Psoas muscle (tissue), 8 donors: ENCODE measurements at regions of chr18 and their contacts with region 1.

Region 1: GRCh38 chr18:48589797-48590519 is 51.1 kb downstream of the CTIF start:
- DNase-seq: peak; percentile 71 to 86
- ATAC-seq: peak; percentile 65 to 84 (median 82)
- H3K4me3 ChIP-seq: no peak overlapping the region
- H3K27ac ChIP-seq: peak overlapping the region; percentile 58
- H3K4me1 ChIP-seq: peaks cover 34% of the 10 kb centered on the region
- H3K27me3 ChIP-seq: no peaks in the 10 kb centered on the region
- CTCF ChIP-seq: no peak

Region 2: DNA sequence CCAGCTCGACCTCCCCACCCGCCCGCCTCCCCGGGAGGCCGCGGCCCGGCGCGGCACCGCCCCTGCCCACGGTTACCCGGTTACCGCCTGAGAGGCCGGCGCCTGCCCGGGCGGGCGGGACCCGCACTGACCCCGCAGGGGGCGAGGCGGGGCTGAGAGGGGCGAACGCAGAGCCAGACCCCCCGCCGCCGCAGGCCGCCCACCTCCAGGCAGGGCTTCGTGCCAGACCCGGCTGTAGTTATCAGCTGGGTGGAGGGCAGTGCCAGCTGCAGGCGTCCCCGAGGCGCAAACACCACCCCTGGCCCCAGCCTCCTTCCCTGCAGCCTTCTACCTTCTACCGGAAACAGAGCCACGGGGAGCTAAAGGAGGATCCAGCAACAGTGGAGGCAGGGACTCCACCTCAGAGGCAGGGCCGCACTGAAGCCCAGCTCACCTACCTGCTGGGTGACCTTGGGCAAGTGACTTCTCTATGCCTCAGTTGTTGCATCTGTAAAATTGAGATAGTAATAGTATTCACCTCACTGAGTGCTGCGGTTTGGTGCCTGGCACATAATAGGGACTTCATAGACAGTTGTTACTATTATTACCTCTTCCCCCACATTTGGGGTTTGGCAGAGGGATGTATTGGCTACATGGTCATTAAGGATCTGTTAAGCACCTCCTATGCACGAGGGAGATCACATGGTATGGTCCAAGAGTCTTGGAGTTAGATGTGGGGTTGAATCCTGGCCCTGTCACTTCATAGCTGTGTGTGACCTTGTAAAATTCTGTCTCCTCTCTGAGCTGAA is 427.9 kb before region 1 on chr18:
- intact Hi-C with region 1: no loop called
- DNase-seq: no peak
- ATAC-seq: peak; percentile 34 to 76 (median 65)
- H3K4me3 ChIP-seq: peak overlapping the region; percentile 70
- H3K27ac ChIP-seq: peak overlapping the region; percentile 43
- H3K4me1 ChIP-seq: peaks cover 3% of the 10 kb centered on the region
- H3K27me3 ChIP-seq: no peaks in the 10 kb centered on the region
- CTCF ChIP-seq: no peak

Region 3: DNA sequence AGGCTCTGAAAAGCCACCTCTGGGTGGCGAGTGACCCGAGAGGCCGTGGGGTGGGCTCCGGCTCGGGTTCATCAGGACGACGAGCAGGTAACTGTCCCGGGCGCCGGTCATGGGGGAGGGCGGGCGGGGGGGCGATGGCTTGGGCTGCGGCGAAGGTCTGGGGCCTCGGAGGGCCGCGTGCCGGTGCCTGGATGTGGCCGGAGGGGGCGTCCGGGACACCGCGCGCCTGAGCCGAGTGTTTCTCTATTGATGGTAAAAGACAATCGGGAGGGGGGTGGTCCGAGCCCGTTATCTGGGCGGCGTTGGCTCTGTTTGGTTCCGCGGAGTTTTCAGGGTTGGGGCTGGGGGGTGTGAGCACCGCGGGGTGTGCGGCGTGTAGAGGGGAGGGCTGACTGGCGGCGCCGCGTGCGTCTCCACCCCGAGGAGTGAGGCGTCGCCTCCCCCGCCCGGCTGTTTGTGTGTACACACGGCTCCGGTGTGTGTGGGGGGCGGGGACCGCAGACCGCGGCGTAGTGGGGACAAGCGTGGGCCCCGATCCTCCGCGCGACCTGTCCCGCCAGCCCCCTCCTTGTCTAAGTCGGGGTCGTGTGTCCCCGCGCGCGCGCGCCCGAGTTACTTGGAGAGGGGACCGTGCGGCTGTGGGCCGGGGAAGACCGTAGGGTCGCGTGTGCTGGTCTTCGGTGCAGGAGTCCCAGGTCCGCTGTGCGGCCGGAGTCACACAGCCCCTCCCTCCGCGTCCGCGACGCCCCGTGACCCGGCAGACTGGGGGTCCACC is 49.5 kb before region 1 on chr18:
- intact Hi-C with region 1: loop called (anchors 5 kb)
- DNase-seq: peak; percentile 80 to 89
- ATAC-seq: peak; percentile 76 to 83 (median 80)
- H3K4me3 ChIP-seq: peak overlapping the region; percentile 77
- H3K27ac ChIP-seq: peak overlapping the region; percentile 95
- H3K4me1 ChIP-seq: peaks cover 38% of the 10 kb centered on the region
- H3K27me3 ChIP-seq: no peaks in the 10 kb centered on the region
- CTCF ChIP-seq: peak; percentile 25

Region 4: GRCh38 chr18:48605408-48605845 is 15.5 kb after region 1 on chr18:
- intact Hi-C with region 1: no loop called
- DNase-seq: no peak
- ATAC-seq: no peak
- H3K4me3 ChIP-seq: no peak overlapping the region
- H3K27ac ChIP-seq: no peak overlapping the region
- H3K4me1 ChIP-seq: peaks cover 46% of the 10 kb centered on the region
- H3K27me3 ChIP-seq: no peaks in the 10 kb centered on the region
- CTCF ChIP-seq: no peak

Region 5: DNA sequence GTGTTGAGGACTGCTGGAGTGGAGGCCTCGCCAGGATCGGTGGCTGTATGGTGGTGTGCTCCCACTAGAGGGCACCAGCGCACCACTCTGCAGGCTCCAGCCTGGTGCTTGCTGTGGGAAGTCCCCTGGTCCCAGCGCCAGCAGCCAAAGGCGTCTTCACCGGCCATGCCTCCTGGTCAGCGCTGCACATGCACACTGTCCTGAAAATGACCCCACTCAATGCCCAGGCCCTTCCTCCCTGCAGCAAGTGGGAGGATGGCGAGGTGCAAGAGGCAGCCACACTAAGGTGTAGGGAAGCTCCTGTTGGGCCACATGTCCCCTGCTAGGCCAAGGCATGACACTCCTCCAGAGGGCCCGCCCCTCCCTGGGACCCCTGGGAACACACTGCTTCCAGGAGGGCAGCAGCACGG is 85.4 kb after region 1 on chr18:
- intact Hi-C with region 1: no loop called
- DNase-seq: peak; percentile 88 to 93
- ATAC-seq: peak; percentile 91 to 97 (median 95)
- H3K4me3 ChIP-seq: no peak overlapping the region
- H3K27ac ChIP-seq: peak overlapping the region; percentile 23
- H3K4me1 ChIP-seq: peaks cover 32% of the 10 kb centered on the region
- H3K27me3 ChIP-seq: no peaks in the 10 kb centered on the region
- CTCF ChIP-seq: peak; percentile 95